ENCODE measurements at regions of chr6 and their contacts with region 1.

Region 1: DNA sequence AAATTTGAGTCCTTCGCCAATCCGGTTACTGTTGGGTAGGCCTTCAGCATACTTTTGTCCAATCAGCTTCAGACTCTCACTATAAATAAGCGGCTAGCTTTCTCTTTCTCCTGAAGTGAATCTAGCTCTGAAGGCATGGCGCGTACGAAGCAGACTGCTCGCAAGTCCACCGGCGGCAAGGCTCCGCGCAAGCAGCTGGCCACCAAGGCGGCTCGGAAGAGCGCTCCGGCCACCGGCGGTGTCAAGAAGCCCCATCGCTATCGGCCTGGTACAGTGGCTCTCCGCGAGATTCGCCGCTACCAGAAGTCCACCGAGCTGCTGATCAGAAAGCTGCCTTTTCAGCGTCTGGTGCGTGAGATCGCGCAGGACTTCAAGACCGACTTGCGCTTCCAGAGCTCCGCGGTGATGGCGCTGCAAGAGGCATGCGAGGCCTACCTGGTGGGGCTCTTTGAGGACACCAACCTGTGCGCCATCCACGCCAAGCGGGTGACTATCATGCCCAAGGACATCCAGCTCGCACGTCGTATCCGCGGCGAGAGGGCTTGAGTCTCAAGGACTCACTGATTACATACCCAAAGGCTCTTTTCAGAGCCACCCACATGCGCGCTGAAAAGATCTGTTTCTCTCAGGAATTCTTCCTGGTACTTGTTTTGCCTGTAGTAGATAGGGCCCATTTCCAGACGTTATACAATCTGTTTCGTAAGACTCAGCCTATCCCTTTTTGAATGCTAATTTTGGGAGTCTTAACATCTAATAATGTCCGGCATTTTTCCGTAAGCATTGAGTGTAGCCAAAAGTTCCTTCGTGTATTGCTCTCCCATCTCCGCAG is 102.0 kb downstream of the OR2B2 start:
- DNase-seq: peak; percentile 68
- ATAC-seq: peak; percentile 59
- H3K4me3 Mint-ChIP-seq: peak overlapping the region; percentile 93
- H3K27ac Mint-ChIP-seq: peak overlapping the region; percentile 97
- H3K4me1 Mint-ChIP-seq: peaks cover 59% of the 10 kb centered on the region
- H3K27me3 Mint-ChIP-seq: no peaks in the 10 kb centered on the region
- CTCF ChIP-seq: no peak

Region 2: DNA sequence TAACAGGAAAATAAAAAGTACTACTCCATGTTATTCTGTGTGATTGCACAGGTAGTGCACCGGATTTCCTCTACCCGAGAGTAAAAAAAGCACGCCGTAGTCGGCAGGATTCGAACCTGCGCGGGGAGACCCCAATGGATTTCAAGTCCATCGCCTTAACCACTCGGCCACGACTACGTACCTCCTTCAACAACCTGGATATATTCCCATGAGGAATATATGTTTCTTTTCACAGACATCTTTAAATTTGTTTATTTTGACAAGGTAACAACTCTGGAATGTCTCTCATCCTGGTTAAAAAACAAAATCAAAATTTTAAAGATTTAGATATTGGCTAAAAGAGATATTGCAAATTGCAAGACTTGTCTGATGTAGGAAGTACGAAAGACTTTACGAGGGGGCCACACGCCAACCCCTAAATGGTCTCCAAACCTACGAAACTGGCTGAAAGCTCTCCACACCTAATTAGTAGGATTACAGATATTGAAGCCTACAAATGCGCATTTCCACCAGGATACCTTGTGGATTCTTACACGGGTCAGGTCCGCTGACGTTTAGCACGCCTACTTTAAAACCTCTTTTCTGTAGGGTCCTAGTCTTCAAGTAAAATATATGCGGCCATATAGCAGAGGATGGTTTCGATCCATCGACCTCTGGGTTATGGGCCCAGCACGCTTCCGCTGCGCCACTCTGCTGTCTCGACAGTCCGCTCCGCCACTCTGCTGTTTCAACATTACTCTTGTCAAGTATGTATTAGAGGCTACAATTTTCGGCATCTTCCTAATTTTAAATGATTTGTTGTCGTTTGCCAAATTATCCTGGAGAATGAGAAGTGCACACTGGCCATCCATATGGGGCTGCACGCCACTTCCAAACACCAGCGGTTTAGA is 1497.4 kb before region 1 on chr6:
- CTCF ChIA-PET with region 1: no interaction called
- POLR2A ChIA-PET with region 1: no interaction called
- intact Hi-C with region 1: loop called (anchors 10 kb)
- DNase-seq: peak; percentile 63
- ATAC-seq: peak; percentile 79
- H3K4me3 Mint-ChIP-seq: peak overlapping the region; percentile 90
- H3K27ac Mint-ChIP-seq: peak overlapping the region; percentile 95
- H3K4me1 Mint-ChIP-seq: peaks cover 28% of the 10 kb centered on the region
- H3K27me3 Mint-ChIP-seq: peaks cover 5% of the 10 kb centered on the region
- CTCF ChIP-seq: no peak

Region 3: GRCh38 chr6:27772261-27773001 is 37.7 kb before region 1 on chr6:
- CTCF ChIA-PET with region 1: interaction called, 11 read pairs
- POLR2A ChIA-PET with region 1: interaction called, 5 read pairs
- intact Hi-C with region 1: no loop called
- DNase-seq: peak; percentile 74
- ATAC-seq: peak; percentile 92
- H3K4me3 Mint-ChIP-seq: peak overlapping the region; percentile 57
- H3K27ac Mint-ChIP-seq: peak overlapping the region; percentile 66
- H3K4me1 Mint-ChIP-seq: peaks cover 38% of the 10 kb centered on the region
- H3K27me3 Mint-ChIP-seq: peaks cover 5% of the 10 kb centered on the region
- CTCF ChIP-seq: peak; percentile 66

Region 4: GRCh38 chr6:27825025-27825793 is 15.1 kb after region 1 on chr6:
- CTCF ChIA-PET with region 1: interaction called, 11 read pairs
- POLR2A ChIA-PET with region 1: interaction called, 334 read pairs
- intact Hi-C with region 1: loop called (anchors 1 kb)
- DNase-seq: no peak
- ATAC-seq: no peak
- H3K4me3 Mint-ChIP-seq: peak overlapping the region; percentile 96
- H3K27ac Mint-ChIP-seq: peak overlapping the region; percentile 99
- H3K4me1 Mint-ChIP-seq: peaks cover 31% of the 10 kb centered on the region
- H3K27me3 Mint-ChIP-seq: no peaks in the 10 kb centered on the region
- CTCF ChIP-seq: no peak

Region 5: GRCh38 chr6:27879837-27880236 is 69.7 kb after region 1 on chr6:
- CTCF ChIA-PET with region 1: no interaction called
- POLR2A ChIA-PET with region 1: no interaction called
- intact Hi-C with region 1: no loop called
- DNase-seq: no peak
- ATAC-seq: no peak
- H3K4me3 Mint-ChIP-seq: no peak overlapping the region
- H3K27ac Mint-ChIP-seq: no peak overlapping the region
- H3K4me1 Mint-ChIP-seq: no peaks in the 10 kb centered on the region
- H3K27me3 Mint-ChIP-seq: no peaks in the 10 kb centered on the region
- CTCF ChIP-seq: no peak